ENCODE measurements at regions of chr10 and their contacts with region 1.

Region 1: GRCh38 chr10:69103784-69104183 is 15.9 kb downstream of the SRGN start:
- H3K4me3 ChIP-seq: no peak overlapping the region
- H3K27ac ChIP-seq: no peak overlapping the region
- H3K4me1 ChIP-seq: no peaks in the 10 kb centered on the region
- CTCF ChIP-seq: no peak

Region 2: DNA sequence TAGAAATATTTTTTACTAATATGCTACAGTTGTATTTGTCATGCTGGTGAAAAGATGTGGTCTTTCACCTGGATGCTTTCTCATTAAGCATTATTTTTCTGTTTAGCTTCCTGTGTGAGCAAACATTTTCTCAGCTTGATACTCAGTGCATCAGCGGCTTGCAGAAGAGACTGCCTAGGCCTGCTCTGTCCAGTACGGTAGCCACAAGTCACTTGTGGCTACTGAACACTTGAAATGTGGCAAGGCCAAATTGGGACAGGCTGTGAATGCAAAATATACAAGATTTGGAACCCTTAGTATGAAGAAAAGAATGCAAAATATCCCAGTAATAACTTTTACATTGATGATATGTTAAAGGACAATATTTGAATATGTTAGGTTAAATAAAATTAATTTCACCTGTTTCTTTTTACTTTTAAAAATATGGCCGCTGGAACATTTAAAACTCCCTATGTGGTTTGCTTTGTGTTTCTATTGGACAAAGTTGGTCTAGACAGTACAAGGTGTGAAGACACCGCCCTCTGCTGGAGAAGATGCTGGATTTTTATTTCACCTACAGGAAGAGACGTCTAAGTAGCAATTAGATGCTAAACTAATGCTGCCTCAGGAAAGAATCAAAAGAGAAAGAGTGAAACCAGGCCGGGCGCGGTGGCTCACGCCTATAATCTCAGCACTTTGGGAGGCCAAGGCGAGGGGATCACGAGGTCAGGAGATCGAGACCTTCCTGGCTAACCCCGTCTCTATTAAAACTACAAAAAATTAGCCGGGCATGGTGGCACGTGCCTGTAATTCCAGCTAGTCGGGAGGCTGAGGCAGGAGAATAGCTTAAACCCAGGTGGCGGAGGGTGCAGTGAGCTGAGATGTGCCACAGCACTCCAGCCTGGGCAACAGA is 10.6 kb before region 1 on chr10:
- CTCF ChIA-PET with region 1: interaction called, 12 read pairs
- POLR2A ChIA-PET with region 1: no interaction called
- H3K4me3 ChIP-seq: no peak overlapping the region
- H3K27ac ChIP-seq: no peak overlapping the region
- H3K4me1 ChIP-seq: no peaks in the 10 kb centered on the region
- CTCF ChIP-seq: peak; percentile 52

Measured in HEK293 (cell line).